Head of caudate nucleus (tissue), 42 donors: ENCODE measurements at regions of chr1 and their contacts with region 1.

Region 1: GRCh38 chr1:8026153-8026975 is at the start of gene ERRFI1:
- DNase-seq: peak; percentile 86 to 99 (median 97)

Region 2: DNA sequence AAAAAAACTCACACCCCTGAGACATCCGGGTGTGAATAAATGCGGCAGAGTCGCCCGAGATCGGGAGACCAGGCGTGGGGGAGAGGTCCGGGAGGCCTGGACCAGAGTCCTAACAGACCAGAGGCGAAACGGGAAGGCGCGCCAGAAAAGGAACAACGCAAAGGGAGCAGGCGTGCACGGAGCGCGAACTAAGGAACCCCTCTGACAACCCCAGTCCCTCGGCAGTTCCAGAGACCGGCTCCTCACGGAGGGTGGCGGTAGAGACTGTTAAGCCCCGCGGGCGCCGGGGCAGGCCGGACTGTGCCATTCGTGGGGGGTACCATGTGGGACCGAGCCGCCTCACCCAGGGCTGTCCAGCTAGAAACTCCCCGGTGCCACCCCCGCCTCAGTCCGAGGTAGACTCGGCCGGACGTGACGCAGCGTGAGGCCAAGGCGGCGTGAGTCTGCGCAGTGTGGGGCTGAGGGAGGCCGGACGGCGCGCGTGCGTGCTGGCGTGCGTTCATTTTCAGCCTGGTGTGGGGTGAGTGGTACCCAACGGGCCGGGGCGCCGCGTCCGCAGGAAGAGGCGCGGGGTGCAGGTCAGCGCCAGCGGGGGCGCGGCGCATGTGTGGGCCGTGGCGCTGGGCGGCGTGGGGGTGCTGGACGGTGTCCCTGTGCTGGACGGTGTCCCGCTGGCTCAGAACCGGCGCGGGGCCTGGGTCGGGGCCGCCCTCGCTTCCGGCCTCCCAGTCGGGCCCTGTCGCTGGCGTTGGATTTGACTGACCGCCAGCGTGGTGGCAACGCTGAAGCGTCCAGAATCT is 64.9 kb before region 1 on chr1 and contains the start of gene PARK7:
- intact Hi-C with region 1: loop called (anchors 10 kb)
- DNase-seq: peak; percentile 98 to 100 (median 100)

Region 3: GRCh38 chr1:8266436-8267165 is 240.2 kb after region 1 on chr1:
- intact Hi-C with region 1: no loop called
- DNase-seq: no peak

Region 4: GRCh38 chr1:8317647-8318381 is 291.4 kb after region 1 on chr1 and contains the start of gene SLC45A1:
- intact Hi-C with region 1: loop called (anchors 2 kb)
- DNase-seq: peak; percentile 70 to 95 (median 89)